ENCODE measurements at regions of chr19 and their contacts with region 1.

Region 1: GRCh38 chr19:46661020-46661731 is at the start of gene DACT3:
- DNase-seq: peak; percentile 100
- ATAC-seq: peak; percentile 91
- H3K4me3 Mint-ChIP-seq: peak within 1 kb of the TSS; percentile 76
- H3K27ac Mint-ChIP-seq: peak within 1 kb of the TSS; percentile 85
- H3K4me1 Mint-ChIP-seq: peaks cover 19% of the 10 kb centered on the region
- H3K27me3 Mint-ChIP-seq: peaks cover 51% of the 10 kb centered on the region
- CTCF ChIP-seq: no peak
- total RNA-seq, gene DACT3: 1.8 to 1.9 TPM (median 1.8 TPM) in 3 replicates

Region 2: DNA sequence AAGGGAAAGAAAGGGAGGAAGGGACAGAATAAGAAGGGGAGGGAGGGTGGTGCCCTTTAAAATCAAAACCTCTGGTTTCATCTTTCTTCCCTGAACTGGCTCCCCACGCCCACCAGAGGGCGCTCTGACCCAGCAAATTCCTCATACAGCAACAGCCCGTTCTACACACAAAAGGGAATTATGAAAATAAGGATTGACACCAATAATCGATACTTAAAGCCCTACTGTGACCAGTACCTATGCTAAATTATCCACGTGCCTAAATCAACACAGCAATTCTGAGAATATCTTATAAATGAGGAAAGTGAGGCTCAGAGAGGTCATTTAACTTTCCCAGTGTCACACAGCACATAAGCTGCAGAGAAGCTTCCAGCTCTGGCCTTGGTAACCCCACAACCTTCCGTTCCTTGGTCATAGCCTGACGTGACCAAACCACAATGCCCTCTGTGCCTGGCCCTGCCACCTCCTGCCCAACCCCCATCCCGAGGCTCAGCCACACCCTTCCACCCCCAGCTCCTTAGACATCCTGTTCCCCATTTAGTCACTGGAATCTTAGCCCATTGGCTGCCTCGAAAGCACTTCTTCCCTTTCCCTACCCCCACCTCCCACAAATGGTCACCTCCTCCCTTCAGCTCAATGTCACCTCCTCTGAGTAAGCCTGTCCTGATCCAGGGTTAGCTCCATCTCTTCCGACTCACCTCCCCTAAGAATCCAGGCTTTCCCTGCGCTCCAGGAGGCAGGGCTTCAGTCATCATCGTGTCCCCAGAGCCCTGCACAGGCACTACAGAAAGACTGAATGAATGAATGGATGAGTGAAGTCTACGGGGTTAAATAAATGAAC is 131.3 kb before region 1 on chr19:
- CTCF ChIA-PET with region 1: interaction called, 42 read pairs
- POLR2A ChIA-PET with region 1: no interaction called
- DNase-seq: peak; percentile 81
- ATAC-seq: peak; percentile 48
- H3K4me3 Mint-ChIP-seq: peak overlapping the region; percentile 40
- H3K27ac Mint-ChIP-seq: peak overlapping the region; percentile 55; the same call in 1 of the 2 replicates
- H3K4me1 Mint-ChIP-seq: peaks cover 26% of the 10 kb centered on the region
- H3K27me3 Mint-ChIP-seq: peaks cover 3% of the 10 kb centered on the region; the same call in 1 of the 2 replicates
- CTCF ChIP-seq: peak; percentile 96

Region 3: GRCh38 chr19:46587861-46588260 is 73.3 kb before region 1 on chr19:
- CTCF ChIA-PET with region 1: no interaction called
- POLR2A ChIA-PET with region 1: no interaction called
- DNase-seq: no peak
- ATAC-seq: no peak
- H3K4me3 Mint-ChIP-seq: no peak overlapping the region
- H3K27ac Mint-ChIP-seq: no peak overlapping the region
- H3K4me1 Mint-ChIP-seq: no peaks in the 10 kb centered on the region
- H3K27me3 Mint-ChIP-seq: no peaks in the 10 kb centered on the region; the same call in none of the 2 replicates
- CTCF ChIP-seq: no peak

Region 4: GRCh38 chr19:46600384-46601317 is 60.5 kb before region 1 on chr19:
- CTCF ChIA-PET with region 1: interaction called, 48 read pairs
- POLR2A ChIA-PET with region 1: interaction called, 3 read pairs
- DNase-seq: peak; percentile 96
- ATAC-seq: peak; percentile 89
- H3K4me3 Mint-ChIP-seq: peak overlapping the region; percentile 88
- H3K27ac Mint-ChIP-seq: peak overlapping the region; percentile 100
- H3K4me1 Mint-ChIP-seq: peaks cover 27% of the 10 kb centered on the region
- H3K27me3 Mint-ChIP-seq: no peaks in the 10 kb centered on the region; the same call in 1 of the 2 replicates
- CTCF ChIP-seq: no peak

Region 5: DNA sequence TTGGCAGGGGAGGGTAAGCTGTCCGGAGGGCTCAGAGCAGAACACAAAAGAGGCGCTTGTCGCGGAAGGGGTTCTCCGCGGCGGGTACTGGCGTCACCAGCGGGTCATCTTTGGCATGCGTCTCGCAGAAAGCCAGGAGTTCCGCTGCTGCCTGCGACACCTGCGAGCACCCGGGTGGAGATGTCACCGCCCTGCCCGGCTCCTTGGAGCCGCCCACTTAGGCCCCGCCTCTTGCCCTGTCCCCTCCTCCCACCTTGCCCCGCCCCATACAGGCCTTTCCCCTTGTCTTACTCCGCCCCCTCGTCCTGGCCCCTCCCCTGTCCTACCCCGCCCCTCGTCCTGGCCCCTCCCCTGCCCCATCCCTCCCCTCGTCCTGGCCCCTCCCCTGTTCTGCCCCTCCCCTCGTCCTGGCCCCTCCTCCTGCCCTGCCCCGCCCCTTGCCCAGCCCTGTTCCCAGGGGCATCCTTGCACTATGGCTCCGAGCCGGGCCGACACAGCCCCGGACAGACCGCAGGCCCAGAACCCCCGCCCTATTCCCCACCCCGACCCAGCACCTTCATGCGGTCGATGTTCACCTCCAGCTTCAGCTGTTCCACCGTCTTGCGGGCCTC is 27.0 kb before region 1 on chr19:
- CTCF ChIA-PET with region 1: interaction called, 78 read pairs
- POLR2A ChIA-PET with region 1: interaction called, 3 read pairs
- DNase-seq: peak; percentile 98
- ATAC-seq: peak; percentile 83
- H3K4me3 Mint-ChIP-seq: peak overlapping the region; percentile 72
- H3K27ac Mint-ChIP-seq: no peak overlapping the region
- H3K4me1 Mint-ChIP-seq: peaks cover 27% of the 10 kb centered on the region
- H3K27me3 Mint-ChIP-seq: peaks cover 39% of the 10 kb centered on the region
- CTCF ChIP-seq: no peak

Region 6: DNA sequence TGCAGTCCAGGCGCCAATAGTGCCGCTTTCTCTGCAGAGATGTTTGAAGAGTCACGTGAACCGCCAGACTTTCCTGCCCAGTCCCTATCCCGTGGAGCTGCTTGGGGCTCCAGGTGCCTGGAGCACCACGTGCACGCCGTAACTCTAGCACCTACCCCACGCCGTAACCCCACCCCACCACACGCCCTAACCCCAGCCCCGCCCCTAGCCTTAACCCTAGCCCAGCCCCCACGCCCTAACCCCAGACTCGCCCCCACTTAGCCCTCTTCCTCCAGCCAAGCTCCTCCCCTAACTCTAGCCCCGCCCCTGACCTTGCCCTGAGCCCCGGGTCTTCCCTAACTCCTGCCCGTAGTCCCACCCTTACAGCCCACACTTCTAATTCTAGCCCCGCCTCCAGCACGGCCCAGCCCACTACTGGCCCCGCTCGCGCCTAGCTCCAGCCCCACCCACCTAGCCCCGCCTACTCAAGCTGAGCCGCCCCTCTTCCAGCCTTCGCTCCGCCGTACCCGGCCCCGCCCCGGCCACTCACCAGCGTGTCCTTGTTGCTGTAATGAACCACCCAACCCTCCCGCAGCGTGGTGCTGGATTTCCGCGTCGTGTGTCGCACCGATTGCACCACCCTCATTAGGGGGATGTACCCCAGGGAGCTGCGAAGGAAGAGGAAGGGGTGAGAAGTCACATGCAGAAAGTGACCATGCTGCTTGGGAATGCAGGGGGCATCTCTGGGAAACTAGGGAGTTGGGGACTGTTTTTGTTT is 36.2 kb after region 1 on chr19:
- CTCF ChIA-PET with region 1: interaction called, 30 read pairs
- POLR2A ChIA-PET with region 1: interaction called, 4 read pairs
- DNase-seq: peak; percentile 100
- ATAC-seq: peak; percentile 99
- H3K4me3 Mint-ChIP-seq: peak overlapping the region; percentile 55
- H3K27ac Mint-ChIP-seq: peak overlapping the region; percentile 97
- H3K4me1 Mint-ChIP-seq: peaks cover 11% of the 10 kb centered on the region
- H3K27me3 Mint-ChIP-seq: no peaks in the 10 kb centered on the region
- CTCF ChIP-seq: no peak

Region 7: DNA sequence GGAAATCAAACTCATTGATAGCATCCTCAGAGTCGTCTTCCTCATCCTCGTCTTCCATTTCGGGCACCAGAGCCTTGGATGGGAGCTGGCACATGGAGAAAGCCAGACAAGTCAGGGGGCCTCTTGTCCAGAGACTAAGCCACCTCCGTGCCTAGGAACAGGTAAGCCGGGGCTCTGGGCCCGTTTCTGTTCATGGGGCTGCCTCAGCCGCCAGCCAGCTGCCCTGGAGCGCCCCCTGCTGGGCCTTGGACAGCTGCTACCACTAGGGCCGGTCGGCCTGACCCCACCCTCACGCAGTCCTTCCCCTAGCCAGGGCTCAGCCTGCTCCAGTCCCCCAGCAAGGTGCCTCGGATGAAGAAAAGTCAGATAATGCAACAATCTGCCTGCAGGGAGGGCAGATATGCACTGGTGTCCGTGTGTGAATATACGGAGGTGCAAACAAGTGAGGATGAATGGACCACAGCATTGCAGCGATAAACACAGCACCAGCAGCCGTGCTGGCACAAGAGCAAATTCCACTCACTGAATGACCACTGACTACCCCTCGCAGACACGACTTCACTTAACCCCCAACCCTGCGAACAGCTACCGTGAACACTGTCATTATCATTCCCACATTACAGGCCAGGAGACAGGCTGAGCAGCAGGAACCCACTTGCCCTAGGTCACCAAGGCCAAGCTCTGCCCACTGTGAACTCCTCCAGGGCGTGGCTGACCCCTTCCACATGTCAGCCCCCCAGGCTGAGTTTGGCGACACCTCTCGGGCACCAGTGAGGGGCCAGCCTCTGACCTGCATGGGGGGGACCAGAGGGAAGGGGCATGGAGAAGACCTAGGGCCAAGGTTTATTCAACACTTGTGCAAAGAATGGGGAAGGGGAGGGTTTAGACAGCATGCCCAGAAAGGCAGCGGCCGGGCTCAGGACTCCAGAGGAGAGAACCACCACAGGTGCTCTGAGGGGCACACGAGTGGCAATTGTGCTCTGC is 67.8 kb after region 1 on chr19:
- CTCF ChIA-PET with region 1: interaction called, 11 read pairs
- POLR2A ChIA-PET with region 1: no interaction called
- DNase-seq: peak; percentile 80
- ATAC-seq: peak; percentile 87
- H3K4me3 Mint-ChIP-seq: no peak overlapping the region
- H3K27ac Mint-ChIP-seq: peak overlapping the region; percentile 59; the same call in 1 of the 2 replicates
- H3K4me1 Mint-ChIP-seq: peaks cover 14% of the 10 kb centered on the region
- H3K27me3 Mint-ChIP-seq: no peaks in the 10 kb centered on the region; the same call in 1 of the 2 replicates
- CTCF ChIP-seq: peak; percentile 79

Region 8: DNA sequence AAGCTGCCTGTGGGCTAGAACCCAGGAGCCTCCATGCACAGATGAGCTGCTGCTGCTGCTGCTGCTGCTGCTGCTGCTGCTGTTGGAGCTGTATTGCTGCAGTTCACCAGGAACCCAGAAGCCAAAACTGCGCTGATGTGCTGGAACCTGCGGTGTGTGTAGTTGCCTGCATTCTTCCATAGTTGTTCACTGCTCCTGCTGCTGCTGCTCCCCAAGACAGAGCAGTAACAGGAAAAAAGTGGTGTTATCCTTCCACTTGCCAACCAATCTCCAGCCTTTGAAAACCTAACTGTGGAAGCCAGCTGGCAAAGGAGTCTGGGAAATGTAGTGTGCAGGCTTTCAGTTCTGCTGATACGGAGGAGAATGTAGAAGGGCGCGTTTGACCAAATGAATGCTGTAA is 237.6 kb after region 1 on chr19:
- CTCF ChIA-PET with region 1: no interaction called
- POLR2A ChIA-PET with region 1: no interaction called
- DNase-seq: no peak
- ATAC-seq: peak; percentile 24
- H3K4me3 Mint-ChIP-seq: no peak overlapping the region
- H3K27ac Mint-ChIP-seq: peak overlapping the region; percentile 4; the same call in 1 of the 2 replicates
- H3K4me1 Mint-ChIP-seq: peaks cover 36% of the 10 kb centered on the region
- H3K27me3 Mint-ChIP-seq: no peaks in the 10 kb centered on the region
- CTCF ChIP-seq: no peak

Measured in WTC11 (cell line).